IMR-90 (cell line): ENCODE measurements at regions of chrX and their contacts with region 1.

Region 1: GRCh38 chrX:153794018-153794896 is at the starts of genes IDH3G and SSR4:
- DNase-seq: peak; percentile 93
- ATAC-seq: peak; percentile 92
- H3K4me3 ChIP-seq: peak within 1 kb of the TSS; percentile 94
- H3K27ac ChIP-seq: peak within 1 kb of the TSS; percentile 99
- H3K4me1 ChIP-seq: peaks cover 4% of the 10 kb centered on the region; the same call in 1 of the 2 replicates
- H3K27me3 ChIP-seq: no peaks in the 10 kb centered on the region
- CTCF ChIP-seq: peak; percentile 28; the same call in 1 of the 2 replicates
- POLR2A ChIP-seq: peak; percentile 73
- RAD21 ChIP-seq: no peak
- total RNA-seq, gene IDH3G: 75.8 and 79.4 TPM in 2 replicates
- total RNA-seq, gene SSR4: 118 and 141 TPM in 2 replicates

Region 2: GRCh38 chrX:153845842-153846241 is 51.6 kb after region 1 on chrX:
- CTCF ChIA-PET with region 1: no interaction called
- POLR2A ChIA-PET with region 1: no interaction called
- dilution Hi-C with region 1: no loop called
- in situ Hi-C with region 1: no loop called
- intact Hi-C with region 1: no loop called
- DNase-seq: no peak
- ATAC-seq: no peak
- H3K4me3 ChIP-seq: no peak overlapping the region
- H3K27ac ChIP-seq: no peak overlapping the region
- H3K4me1 ChIP-seq: no peaks in the 10 kb centered on the region
- H3K27me3 ChIP-seq: peaks cover 26% of the 10 kb centered on the region
- CTCF ChIP-seq: no peak
- POLR2A ChIP-seq: no peak
- RAD21 ChIP-seq: no peak

Region 3: GRCh38 chrX:153917861-153918260 is 123.6 kb after region 1 on chrX:
- CTCF ChIA-PET with region 1: no interaction called
- POLR2A ChIA-PET with region 1: no interaction called
- dilution Hi-C with region 1: no loop called
- in situ Hi-C with region 1: loop called (anchors 5 kb)
- intact Hi-C with region 1: no loop called
- DNase-seq: no peak
- ATAC-seq: no peak
- H3K4me3 ChIP-seq: no peak overlapping the region
- H3K27ac ChIP-seq: no peak overlapping the region
- H3K4me1 ChIP-seq: no peaks in the 10 kb centered on the region
- H3K27me3 ChIP-seq: peaks cover 21% of the 10 kb centered on the region; the same call in 1 of the 2 replicates
- CTCF ChIP-seq: no peak
- POLR2A ChIP-seq: no peak
- RAD21 ChIP-seq: no peak

Region 4: DNA sequence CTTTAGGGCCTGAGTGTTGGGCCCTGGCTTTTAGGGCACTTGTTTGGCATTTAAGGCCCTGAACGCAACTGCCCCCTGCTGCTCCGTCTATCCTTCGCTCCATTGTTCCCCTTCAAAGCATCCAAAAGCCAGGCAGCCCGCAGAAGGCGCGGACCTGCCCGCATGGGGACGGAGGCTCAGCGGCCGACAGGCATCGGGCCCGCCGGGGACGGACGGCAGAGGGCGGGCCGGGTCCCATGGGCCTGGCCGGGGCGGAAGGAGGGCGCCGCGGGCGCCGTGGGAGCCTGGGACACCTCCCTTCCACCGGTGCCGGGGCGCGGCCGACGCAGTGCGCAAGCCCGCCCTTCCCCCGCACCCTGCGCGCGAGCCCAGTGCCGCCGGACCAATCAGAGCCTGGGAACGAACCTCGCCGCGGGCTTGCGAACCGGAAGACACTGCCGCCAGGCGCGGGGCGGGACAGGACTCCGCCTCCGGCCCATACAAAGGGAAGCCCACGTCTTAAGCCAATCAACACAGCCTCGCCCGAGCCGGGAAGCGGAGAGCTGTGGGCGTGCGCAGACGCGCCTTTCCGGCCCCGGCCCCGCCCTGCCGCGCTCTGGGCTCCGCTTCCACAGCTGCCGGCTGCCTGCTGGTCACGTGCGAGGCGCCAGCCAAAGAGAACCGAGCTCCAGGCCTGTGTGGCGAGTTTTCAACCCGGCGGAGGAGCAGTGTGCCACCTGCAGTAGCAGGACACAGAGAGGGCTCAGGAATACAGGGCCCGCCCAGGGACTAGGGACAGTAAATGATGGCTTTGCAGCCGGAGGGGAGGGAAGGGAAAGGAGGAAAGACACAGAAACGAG is 133.9 kb after region 1 on chrX:
- CTCF ChIA-PET with region 1: interaction called, 3 read pairs
- POLR2A ChIA-PET with region 1: interaction called, 3 read pairs
- dilution Hi-C with region 1: no loop called
- in situ Hi-C with region 1: no loop called
- intact Hi-C with region 1: loop called (anchors 5 kb)
- DNase-seq: peak; percentile 98
- ATAC-seq: peak; percentile 94
- H3K4me3 ChIP-seq: peak overlapping the region; percentile 82
- H3K27ac ChIP-seq: peak overlapping the region; percentile 97
- H3K4me1 ChIP-seq: peaks cover 2% of the 10 kb centered on the region
- H3K27me3 ChIP-seq: no peaks in the 10 kb centered on the region; the same call in 1 of the 2 replicates
- CTCF ChIP-seq: no peak; the same call in 1 of the 2 replicates
- POLR2A ChIP-seq: peak; percentile 65
- RAD21 ChIP-seq: 0 out of 2 replicates have a peak, but pooled peaks have one; percentile 7